H1 (cell line): ENCODE measurements at regions of chr3 and their contacts with region 1.

Region 1: GRCh38 chr3:184808021-184808420 is 3.9 kb upstream of the VPS8 start:
- DNase-seq: peak; percentile 38 to 67
- H3K4me3 ChIP-seq: no peak overlapping the region
- H3K27ac ChIP-seq: no peak overlapping the region
- H3K4me1 ChIP-seq: peaks cover 0 to 5% (median 2%) of the 10 kb centered on the region in 4 experiments; a peak in 3 of 7 replicates
- H3K27me3 ChIP-seq: no peaks in the 10 kb centered on the region; a peak in 1 of 7 replicates
- CTCF ChIP-seq: peak; percentile 72 to 80 (median 80)
- EP300 ChIP-seq: no peak
- POLR2A ChIP-seq: no peak
- RAD21 ChIP-seq: peak; percentile 38 to 51; a peak in 3 of 4 replicates

Region 2: GRCh38 chr3:184549793-184550577 is 258.0 kb before region 1 on chr3:
- CTCF ChIA-PET with region 1: interaction called, 11 read pairs
- POLR2A ChIA-PET with region 1: no interaction called
- DNase-seq: no peak
- H3K4me3 ChIP-seq: no peak overlapping the region
- H3K27ac ChIP-seq: no peak overlapping the region
- H3K4me1 ChIP-seq: no peaks in the 10 kb centered on the region
- H3K27me3 ChIP-seq: no peaks in the 10 kb centered on the region; a peak in 1 of 7 replicates
- CTCF ChIP-seq: no peak
- EP300 ChIP-seq: no peak
- POLR2A ChIP-seq: no peak
- RAD21 ChIP-seq: no peak

Region 3: GRCh38 chr3:184786280-184786941 is 21.6 kb before region 1 on chr3:
- CTCF ChIA-PET with region 1: interaction called, 28 read pairs
- POLR2A ChIA-PET with region 1: interaction called, 3 read pairs
- DNase-seq: no peak
- H3K4me3 ChIP-seq: no peak overlapping the region
- H3K27ac ChIP-seq: no peak overlapping the region
- H3K4me1 ChIP-seq: peaks cover 0 to 5% (median 1%) of the 10 kb centered on the region in 4 experiments; a peak in 4 of 7 replicates
- H3K27me3 ChIP-seq: no peaks in the 10 kb centered on the region; a peak in 1 of 7 replicates
- CTCF ChIP-seq: no peak
- EP300 ChIP-seq: no peak
- POLR2A ChIP-seq: no peak
- RAD21 ChIP-seq: no peak